GM18951 (cell line): ENCODE measurements at regions of chr13 and their contacts with region 1.

Region 1: DNA sequence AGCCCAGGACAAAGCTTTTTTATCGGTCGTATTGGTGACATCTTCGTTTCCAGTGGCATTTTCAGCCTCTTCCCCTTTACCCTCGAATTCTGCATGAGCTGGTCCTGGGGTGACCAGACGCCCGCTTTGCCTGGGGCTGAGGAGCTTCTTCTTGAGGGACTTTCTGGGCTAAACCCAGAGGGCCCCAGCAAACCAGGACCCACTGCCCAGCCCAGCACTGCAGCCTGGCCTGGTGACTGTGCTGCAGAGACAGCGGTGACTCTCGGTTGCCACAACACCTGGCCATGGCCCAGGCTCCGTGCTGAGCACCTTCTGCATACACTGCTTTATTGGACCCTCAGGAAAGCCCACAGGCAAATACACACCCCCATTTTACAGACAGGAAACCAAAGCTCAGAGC is 21.0 kb downstream of the SPACA7 start:
- POLR2A ChIP-seq: no peak

Region 2: DNA sequence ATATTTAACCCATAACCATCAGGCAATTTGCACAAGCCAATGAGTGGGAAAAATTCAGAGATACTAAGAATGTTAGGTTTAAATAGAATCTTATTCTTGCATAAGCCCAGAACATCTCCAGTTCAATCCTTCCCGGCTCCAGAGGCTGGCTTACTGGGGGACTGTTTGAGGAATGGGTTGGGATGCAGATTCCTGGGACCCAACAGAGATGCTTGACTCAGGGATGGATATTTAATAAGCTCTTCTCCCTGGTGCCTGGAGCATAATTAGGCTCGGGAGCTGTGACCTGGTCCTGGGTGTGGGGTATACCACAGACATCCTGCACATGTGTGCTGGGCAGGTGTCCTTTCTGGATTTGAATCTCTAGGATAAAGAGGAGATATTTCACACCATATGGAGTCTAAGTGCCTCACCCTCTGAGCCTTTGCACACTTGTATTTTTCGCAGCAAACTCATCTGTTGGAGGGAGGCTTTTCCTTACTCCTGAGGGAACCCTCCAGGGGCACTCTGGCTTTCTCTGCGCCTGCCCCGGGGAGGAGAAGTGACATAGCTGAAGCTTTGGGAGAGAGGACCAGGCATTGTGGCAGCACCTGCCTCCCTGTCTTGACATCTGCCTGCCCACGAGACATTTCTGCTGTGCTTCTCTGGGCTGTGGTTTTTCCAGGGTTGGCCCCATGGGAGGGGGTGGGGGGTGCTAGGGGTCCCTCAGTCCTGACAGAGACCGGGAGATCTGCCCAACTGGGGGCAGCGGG is 1446.1 kb before region 1 on chr13:
- in situ Hi-C with region 1: loop called (anchors 5 kb)
- POLR2A ChIP-seq: no peak

Region 3: DNA sequence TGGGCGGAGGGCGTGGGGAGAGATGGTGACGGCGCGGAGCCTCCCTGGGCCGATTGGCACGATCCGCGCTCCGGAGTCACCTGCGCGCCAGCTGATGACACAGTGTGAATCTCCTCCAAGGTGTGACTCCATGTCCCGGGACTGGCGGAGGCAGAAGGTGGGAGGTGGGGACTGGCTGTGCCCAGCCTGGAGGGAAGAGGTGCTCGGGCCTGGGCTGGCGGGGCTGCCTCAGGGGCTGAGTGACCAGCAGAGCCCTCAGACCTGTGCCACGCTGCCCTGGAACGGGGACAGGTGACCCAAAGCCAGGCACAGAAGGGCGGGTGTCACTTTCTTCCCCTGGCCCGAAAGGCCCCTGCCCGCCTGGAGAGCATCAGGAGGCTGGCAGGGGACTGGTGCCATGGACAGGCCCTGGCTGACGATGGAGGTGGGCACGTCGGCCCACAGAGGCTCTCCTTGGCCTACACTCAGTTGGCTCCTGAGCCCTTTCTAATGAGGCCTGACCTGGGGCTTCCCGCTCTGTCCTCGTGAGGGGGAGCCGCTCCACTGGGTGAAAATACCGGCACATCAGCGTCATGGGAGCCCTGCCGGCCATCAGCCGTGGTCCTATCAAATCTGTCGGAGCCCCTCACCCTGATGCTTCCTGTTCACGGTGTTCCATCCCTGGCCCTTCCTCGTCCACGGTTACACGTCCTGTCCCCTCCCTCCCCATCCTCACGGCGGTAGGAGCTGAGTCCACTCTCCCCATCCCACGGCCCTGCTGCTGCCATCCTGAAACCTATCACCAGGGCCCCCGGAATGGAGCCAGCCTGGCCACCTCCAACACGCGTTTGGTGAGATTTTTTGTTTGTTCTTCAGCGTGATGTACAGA is 54.6 kb after region 1 on chr13:
- in situ Hi-C with region 1: no loop called
- POLR2A ChIP-seq: no peak

Region 4: DNA sequence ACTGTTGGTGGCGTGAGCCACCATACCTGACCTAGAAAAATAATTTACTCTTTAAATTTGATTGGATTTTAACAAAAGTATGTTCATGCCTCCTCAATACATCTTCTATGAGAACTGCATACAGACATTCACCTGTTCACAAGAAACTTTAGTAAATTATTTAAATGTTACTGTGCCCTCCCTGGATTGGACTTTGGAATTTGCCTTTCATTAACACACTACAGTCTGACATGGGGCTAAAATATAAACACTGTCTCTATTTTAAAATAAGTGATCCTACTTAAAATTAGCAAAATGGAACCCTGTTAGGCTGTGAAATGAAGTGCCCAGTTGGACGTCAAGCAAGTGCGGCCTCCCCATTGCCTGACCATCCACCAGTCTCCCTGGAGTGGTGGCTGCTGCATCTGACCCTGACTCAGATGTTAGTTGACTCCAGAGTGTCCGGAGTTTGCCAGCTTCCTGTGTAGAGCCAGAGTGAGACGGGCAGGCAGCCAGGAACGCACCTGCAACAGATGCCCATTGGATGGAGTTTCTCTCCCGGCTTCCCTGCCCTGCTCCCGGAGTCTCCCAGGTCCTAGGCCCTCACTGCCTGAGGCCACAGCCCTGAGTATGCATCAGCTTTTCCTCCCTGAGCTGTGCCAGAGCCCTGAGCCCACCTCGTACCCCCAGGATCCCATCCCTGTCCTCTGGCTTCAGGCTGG is 246.8 kb after region 1 on chr13:
- in situ Hi-C with region 1: no loop called
- POLR2A ChIP-seq: no peak